ENCODE measurements at regions of chr15 and their contacts with region 1.

Region 1: DNA sequence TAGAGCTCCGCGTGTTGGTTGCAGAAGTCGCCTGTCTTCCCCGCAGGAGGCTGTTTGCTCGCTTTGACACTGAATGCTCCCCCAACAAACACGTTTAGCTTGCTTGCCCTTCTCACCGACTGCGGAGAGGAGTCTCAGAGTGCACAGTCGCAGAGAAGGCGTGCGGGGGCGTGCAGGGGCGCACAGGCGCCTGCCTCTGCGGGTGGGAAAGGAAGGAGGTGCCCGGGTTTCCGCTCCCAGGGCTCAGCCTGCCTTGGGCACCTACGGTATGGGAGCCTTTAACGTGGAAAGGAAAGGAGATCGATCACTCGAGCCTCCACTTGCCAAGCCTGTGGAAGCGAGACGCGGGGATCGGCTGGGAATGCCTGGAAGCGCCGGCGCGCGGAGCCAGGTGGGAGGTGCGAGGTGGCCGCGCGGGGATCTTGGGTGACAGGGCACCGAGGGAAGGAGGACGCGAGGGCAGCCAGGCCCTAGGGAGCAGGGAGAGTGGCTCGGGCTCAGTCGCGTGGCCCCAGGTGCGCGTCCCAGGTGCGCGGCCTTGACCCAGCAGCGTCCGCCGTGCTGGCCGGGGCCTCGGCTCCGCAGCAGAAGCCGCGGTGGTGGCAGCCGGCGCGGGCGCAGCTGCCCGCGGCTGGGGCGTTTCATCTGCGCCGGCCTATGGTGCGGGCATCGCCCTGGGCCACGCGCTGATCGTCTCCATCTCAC is at the start of gene FAN1:
- DNase-seq: peak; percentile 72
- H3K4me3 Mint-ChIP-seq: peak within 1 kb of the TSS; percentile 93
- H3K27ac Mint-ChIP-seq: peak within 1 kb of the TSS; percentile 84
- H3K4me1 Mint-ChIP-seq: peaks cover 32% of the 10 kb centered on the region
- H3K27me3 Mint-ChIP-seq: no peaks in the 10 kb centered on the region
- total RNA-seq, gene FAN1: 26.5 and 27.7 TPM in 2 replicates

Region 2: GRCh38 chr15:30824518-30825165 is 79.0 kb before region 1 on chr15:
- intact Hi-C with region 1: loop called (anchors 5 kb)
- DNase-seq: no peak
- H3K4me3 Mint-ChIP-seq: peak overlapping the region; percentile 100
- H3K27ac Mint-ChIP-seq: peak overlapping the region; percentile 52
- H3K4me1 Mint-ChIP-seq: peaks cover 37% of the 10 kb centered on the region
- H3K27me3 Mint-ChIP-seq: no peaks in the 10 kb centered on the region

Region 3: GRCh38 chr15:30889196-30889595 is 14.5 kb before region 1 on chr15:
- intact Hi-C with region 1: no loop called
- DNase-seq: no peak
- H3K4me3 Mint-ChIP-seq: no peak overlapping the region
- H3K27ac Mint-ChIP-seq: no peak overlapping the region
- H3K4me1 Mint-ChIP-seq: peaks cover under 1% of the 10 kb centered on the region
- H3K27me3 Mint-ChIP-seq: no peaks in the 10 kb centered on the region

Region 4: GRCh38 chr15:30943654-30944335 is 40.1 kb after region 1 on chr15:
- intact Hi-C with region 1: no loop called
- DNase-seq: no peak
- H3K4me3 Mint-ChIP-seq: no peak overlapping the region
- H3K27ac Mint-ChIP-seq: no peak overlapping the region
- H3K4me1 Mint-ChIP-seq: no peaks in the 10 kb centered on the region
- H3K27me3 Mint-ChIP-seq: no peaks in the 10 kb centered on the region

Region 5: GRCh38 chr15:30991255-30992072 is 87.8 kb after region 1 on chr15 and contains the start of gene MTMR10:
- intact Hi-C with region 1: loop called (anchors 1 kb)
- DNase-seq: peak; percentile 75
- H3K4me3 Mint-ChIP-seq: peak within 1 kb of the TSS; percentile 93
- H3K27ac Mint-ChIP-seq: peak within 1 kb of the TSS; percentile 85
- H3K4me1 Mint-ChIP-seq: peaks cover 26% of the 10 kb centered on the region
- H3K27me3 Mint-ChIP-seq: peaks cover 4% of the 10 kb centered on the region
- total RNA-seq, gene MTMR10: 11.8 and 13.4 TPM in 2 replicates

Region 6: GRCh38 chr15:31197497-31198414 is 294.1 kb after region 1 on chr15:
- intact Hi-C with region 1: no loop called
- DNase-seq: no peak
- H3K4me3 Mint-ChIP-seq: no peak overlapping the region
- H3K27ac Mint-ChIP-seq: no peak overlapping the region
- H3K4me1 Mint-ChIP-seq: peaks cover 37% of the 10 kb centered on the region
- H3K27me3 Mint-ChIP-seq: peaks cover 10% of the 10 kb centered on the region

Region 7: GRCh38 chr15:31472636-31473384 is 569.2 kb after region 1 on chr15:
- intact Hi-C with region 1: loop called (anchors 2 kb)
- DNase-seq: peak; percentile 68
- H3K4me3 Mint-ChIP-seq: peak overlapping the region; percentile 76
- H3K27ac Mint-ChIP-seq: peak overlapping the region; percentile 90
- H3K4me1 Mint-ChIP-seq: peaks cover 59% of the 10 kb centered on the region
- H3K27me3 Mint-ChIP-seq: no peaks in the 10 kb centered on the region